HepG2 (cell line): ENCODE measurements at regions of chr20 and their contacts with region 1.

Region 1: DNA sequence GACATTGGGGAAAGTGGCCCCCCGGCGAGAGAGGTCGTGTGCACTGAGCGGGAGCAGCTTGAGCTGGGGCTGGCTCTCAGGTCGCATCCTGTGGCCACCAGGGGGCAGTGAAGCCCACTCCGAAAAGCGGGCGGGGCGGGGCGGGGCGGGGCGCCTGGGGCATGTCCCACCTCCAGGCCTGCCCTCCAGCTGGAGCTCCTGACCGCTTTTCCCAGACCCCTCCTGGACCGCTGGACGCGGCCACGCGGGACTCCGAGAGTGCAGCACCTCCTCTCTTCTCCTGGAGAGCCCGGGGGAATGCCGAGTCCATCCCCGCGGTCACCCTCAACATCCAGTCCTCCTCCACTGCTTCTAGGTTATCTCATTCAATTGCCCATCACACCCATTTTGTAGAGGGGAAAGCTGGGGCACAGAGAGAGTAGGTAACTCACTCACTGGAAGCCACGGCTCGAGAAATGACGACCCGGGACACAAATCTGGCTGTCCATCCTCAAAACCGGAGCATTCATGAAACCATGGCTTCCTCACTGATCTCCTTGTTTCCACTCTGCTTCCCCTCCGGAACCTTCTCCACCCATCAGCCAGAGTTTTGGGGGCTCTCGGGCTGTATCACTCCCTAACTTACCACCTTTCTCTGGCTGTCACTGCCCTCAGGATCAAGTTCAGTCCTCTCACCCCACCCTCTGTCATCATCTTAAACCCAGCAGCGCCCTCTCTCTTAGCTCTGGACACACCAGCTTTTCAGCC is 24.1 kb downstream of the COX4I2 start:
- DNase-seq: peak; percentile 76
- ATAC-seq: peak; percentile 36
- H3K4me3 ChIP-seq: peak overlapping the region; percentile 20 to 66 (median 40)
- H3K27ac ChIP-seq: peak overlapping the region; percentile 41
- H3K4me1 ChIP-seq: peaks cover 64% of the 10 kb centered on the region
- H3K27me3 ChIP-seq: no peaks in the 10 kb centered on the region
- CTCF ChIP-seq: peak; percentile 91
- EP300 ChIP-seq: no peak
- POLR2A ChIP-seq: peak; percentile 56 to 87; a peak in 3 of 4 replicates
- RAD21 ChIP-seq: peak; percentile 91; the same call in 1 of the 2 replicates

Region 2: DNA sequence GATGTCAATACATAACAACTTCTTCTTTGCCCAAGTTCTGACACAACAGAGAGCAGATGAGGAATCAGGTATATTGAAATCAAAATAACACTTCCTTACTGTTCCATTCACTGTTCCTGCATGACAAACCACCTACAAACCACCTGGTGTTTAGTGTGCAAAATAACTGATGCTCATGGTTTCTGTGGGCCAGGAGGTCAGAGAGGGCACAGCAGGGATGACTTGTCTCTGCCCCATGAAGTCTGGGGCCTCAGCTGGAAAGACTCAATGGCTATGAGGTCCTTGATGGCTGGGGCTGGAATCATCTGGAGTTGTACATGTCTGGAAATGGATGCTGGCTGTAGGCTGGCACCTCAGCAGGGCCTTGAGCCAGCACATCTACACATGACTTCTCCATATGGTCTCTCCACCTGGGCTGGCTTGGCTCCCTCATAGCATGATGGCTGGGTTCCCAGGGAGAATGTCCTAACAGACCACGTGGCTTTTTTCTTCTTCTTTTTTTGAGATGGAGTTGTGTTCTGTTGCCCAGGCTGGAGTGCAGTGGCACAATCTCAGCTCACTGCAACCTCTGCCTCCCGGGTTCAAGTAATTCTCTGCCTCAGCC is 31.5 kb before region 1 on chr20:
- CTCF ChIA-PET with region 1: interaction called, 4 read pairs
- POLR2A ChIA-PET with region 1: interaction called, 10 read pairs
- in situ Hi-C with region 1: no loop called
- intact Hi-C with region 1: no loop called
- DNase-seq: no peak
- ATAC-seq: no peak
- H3K4me3 ChIP-seq: no peak overlapping the region
- H3K27ac ChIP-seq: no peak overlapping the region
- H3K4me1 ChIP-seq: peaks cover 17% of the 10 kb centered on the region
- H3K27me3 ChIP-seq: no peaks in the 10 kb centered on the region; a peak in 2 of 5 replicates
- CTCF ChIP-seq: no peak
- EP300 ChIP-seq: no peak
- POLR2A ChIP-seq: no peak
- RAD21 ChIP-seq: no peak

Region 3: GRCh38 chr20:31674895-31675827 is 13.4 kb after region 1 on chr20:
- CTCF ChIA-PET with region 1: interaction called, 5 read pairs
- POLR2A ChIA-PET with region 1: interaction called, 274 read pairs
- in situ Hi-C with region 1: no loop called
- intact Hi-C with region 1: loop called (anchors 2 kb)
- DNase-seq: no peak
- ATAC-seq: no peak
- H3K4me3 ChIP-seq: no peak overlapping the region
- H3K27ac ChIP-seq: peak overlapping the region; percentile 0
- H3K4me1 ChIP-seq: peaks cover 81% of the 10 kb centered on the region
- H3K27me3 ChIP-seq: no peaks in the 10 kb centered on the region
- CTCF ChIP-seq: no peak
- EP300 ChIP-seq: no peak
- POLR2A ChIP-seq: no peak; a peak in 1 of 4 replicates
- RAD21 ChIP-seq: no peak

Region 4: GRCh38 chr20:31684153-31685015 is 22.6 kb after region 1 on chr20:
- CTCF ChIA-PET with region 1: no interaction called
- POLR2A ChIA-PET with region 1: interaction called, 274 read pairs
- in situ Hi-C with region 1: no loop called
- intact Hi-C with region 1: loop called (anchors 2 kb)
- DNase-seq: no peak
- ATAC-seq: 0 out of 3 replicates have a peak, but pooled peaks have one; percentile 3
- H3K4me3 ChIP-seq: no peak overlapping the region
- H3K27ac ChIP-seq: no peak overlapping the region
- H3K4me1 ChIP-seq: peaks cover 80% of the 10 kb centered on the region
- H3K27me3 ChIP-seq: no peaks in the 10 kb centered on the region
- CTCF ChIP-seq: no peak
- EP300 ChIP-seq: no peak
- POLR2A ChIP-seq: peak in 1 of 2 experiments; percentile 62; a peak in 2 of 4 replicates
- RAD21 ChIP-seq: no peak

Region 5: GRCh38 chr20:31691646-31692275 is 30.0 kb after region 1 on chr20:
- CTCF ChIA-PET with region 1: interaction called, 4 read pairs
- POLR2A ChIA-PET with region 1: interaction called, 1,981 read pairs
- in situ Hi-C with region 1: no loop called
- intact Hi-C with region 1: loop called (anchors 5 kb)
- DNase-seq: no peak
- ATAC-seq: no peak
- H3K4me3 ChIP-seq: no peak overlapping the region
- H3K27ac ChIP-seq: peak overlapping the region; percentile 23
- H3K4me1 ChIP-seq: peaks cover 67% of the 10 kb centered on the region
- H3K27me3 ChIP-seq: no peaks in the 10 kb centered on the region
- CTCF ChIP-seq: no peak
- EP300 ChIP-seq: no peak
- POLR2A ChIP-seq: no peak
- RAD21 ChIP-seq: no peak

Region 6: GRCh38 chr20:31738729-31739561 is 77.1 kb after region 1 on chr20 and contains the start of gene TPX2:
- CTCF ChIA-PET with region 1: interaction called, 5 read pairs
- POLR2A ChIA-PET with region 1: interaction called, 23 read pairs
- in situ Hi-C with region 1: no loop called
- intact Hi-C with region 1: no loop called
- DNase-seq: peak; percentile 99
- ATAC-seq: peak; percentile 99
- H3K4me3 ChIP-seq: peak within 1 kb of the TSS; percentile 90 to 97 (median 93)
- H3K27ac ChIP-seq: peak within 1 kb of the TSS; percentile 84
- H3K4me1 ChIP-seq: peaks cover 34% of the 10 kb centered on the region
- H3K27me3 ChIP-seq: peaks cover 0 to 3% of the 10 kb centered on the region in 2 experiments; a peak in 2 of 5 replicates
- CTCF ChIP-seq: peak; percentile 68
- EP300 ChIP-seq: no peak; a peak in 1 of 4 replicates
- POLR2A ChIP-seq: peak; percentile 87 to 95
- RAD21 ChIP-seq: peak; percentile 76
- total RNA-seq, gene TPX2: 124 and 190 TPM in 2 replicates